GM10248 (cell line): ENCODE measurements at regions of chr5 and their contacts with region 1.

Region 1: GRCh38 chr5:158940977-158941376 is 158.7 kb downstream of the EBF1 start:
- DNase-seq: no peak
- CTCF ChIP-seq: no peak

Region 2: DNA sequence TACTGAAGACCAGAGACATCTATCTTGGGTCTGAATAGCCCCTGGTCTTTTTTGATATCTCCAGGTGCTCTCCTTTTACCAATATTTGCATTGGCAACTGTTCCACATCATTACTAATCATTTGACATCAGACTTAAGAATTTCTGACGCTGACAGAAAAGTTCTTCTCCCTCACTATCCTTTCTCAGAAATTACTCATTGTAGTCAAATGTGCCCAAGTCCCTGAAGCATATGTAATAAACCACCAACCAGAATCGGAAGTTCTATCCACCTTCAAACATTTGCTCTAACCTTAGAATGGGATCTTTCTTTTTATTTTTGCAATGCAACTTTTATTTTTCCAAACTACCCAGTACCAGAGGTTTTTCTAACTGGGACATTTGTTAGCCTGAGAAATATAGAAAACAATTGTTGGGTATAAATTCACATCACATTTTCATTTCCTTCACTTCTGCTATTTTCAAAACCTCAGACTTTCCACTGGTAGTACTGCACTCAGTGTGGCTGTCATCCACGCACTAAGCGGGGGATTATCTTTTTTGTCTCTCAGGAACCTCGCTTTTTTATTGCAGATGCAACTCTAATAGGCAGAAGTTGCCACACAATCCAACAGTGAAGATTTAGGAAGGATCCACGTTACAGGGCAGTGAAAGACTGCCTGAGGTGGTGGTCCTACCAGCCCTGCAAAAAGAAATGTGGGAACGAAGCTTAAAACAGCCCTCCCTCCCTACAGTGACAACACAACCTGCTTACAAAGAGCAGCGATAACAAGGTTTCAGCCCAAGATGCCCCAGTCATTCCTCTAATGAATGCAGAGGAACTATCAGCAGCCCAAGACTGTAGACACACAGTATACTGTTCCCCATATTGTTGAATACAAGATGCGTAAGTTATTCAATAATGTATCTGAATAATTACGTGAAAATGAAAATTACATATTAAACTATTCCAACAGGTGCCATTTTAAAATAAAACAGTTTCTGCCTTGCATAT is 42.5 kb before region 1 on chr5:
- CTCF ChIA-PET with region 1: interaction called, 15 read pairs
- POLR2A ChIA-PET with region 1: no interaction called
- DNase-seq: peak; percentile 35
- CTCF ChIP-seq: no peak

Region 3: GRCh38 chr5:158953929-158954534 is 13.1 kb after region 1 on chr5:
- CTCF ChIA-PET with region 1: interaction called, 25 read pairs
- POLR2A ChIA-PET with region 1: no interaction called
- DNase-seq: peak; percentile 56
- CTCF ChIP-seq: no peak